ENCODE measurements at regions of chr10 and their contacts with region 1.

Region 1: DNA sequence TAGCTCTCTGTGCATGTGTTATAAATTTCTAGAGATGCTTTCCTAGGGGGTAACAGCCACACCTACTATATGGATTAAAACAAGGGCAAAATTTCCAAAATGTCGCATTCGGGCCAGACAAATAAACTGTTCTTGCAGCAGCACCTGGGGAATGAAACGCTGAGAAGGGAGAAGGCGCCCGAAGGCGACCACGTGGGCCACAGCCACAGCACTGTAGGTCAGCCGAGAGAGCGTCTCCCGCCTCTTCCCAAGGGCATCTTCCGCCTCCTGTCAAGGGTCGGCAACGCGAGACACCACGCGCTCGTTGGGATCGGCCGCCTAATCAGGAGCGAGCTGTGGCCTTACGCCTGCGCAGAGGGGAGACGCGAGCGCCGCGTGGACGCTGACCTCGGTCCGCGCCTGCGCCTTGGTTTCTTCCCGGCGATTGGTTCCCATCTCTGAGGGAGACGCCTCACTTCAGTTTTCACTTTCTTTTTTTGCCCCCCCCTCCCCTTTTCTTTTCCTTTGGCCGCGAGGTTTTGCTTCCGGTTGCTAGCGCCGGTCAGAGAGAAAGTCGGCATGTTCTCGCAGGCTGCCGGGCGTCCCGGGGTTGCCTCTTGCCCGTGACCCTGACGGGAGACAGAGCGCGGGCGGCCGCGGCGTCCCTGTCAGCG is at the start of gene TASOR2:
- DNase-seq: peak; percentile 99
- H3K4me3 Mint-ChIP-seq: peak within 1 kb of the TSS; percentile 95
- H3K27ac Mint-ChIP-seq: peak within 1 kb of the TSS; percentile 90
- H3K4me1 Mint-ChIP-seq: peaks cover 4% of the 10 kb centered on the region
- H3K27me3 Mint-ChIP-seq: no peaks in the 10 kb centered on the region
- CTCF ChIP-seq: no peak
- total RNA-seq, gene TASOR2: 93.4 and 123 TPM in 2 replicates

Region 2: GRCh38 chr10:5609952-5610616 is 74.4 kb before region 1 on chr10:
- CTCF ChIA-PET with region 1: no interaction called
- POLR2A ChIA-PET with region 1: no interaction called
- intact Hi-C with region 1: no loop called
- DNase-seq: peak; percentile 91
- H3K4me3 Mint-ChIP-seq: peak overlapping the region; percentile 67
- H3K27ac Mint-ChIP-seq: peak overlapping the region; percentile 91
- H3K4me1 Mint-ChIP-seq: peaks cover 50% of the 10 kb centered on the region
- H3K27me3 Mint-ChIP-seq: no peaks in the 10 kb centered on the region
- CTCF ChIP-seq: no peak

Region 3: GRCh38 chr10:5666008-5666829 is 18.2 kb before region 1 on chr10 and contains the start of gene ASB13:
- CTCF ChIA-PET with region 1: interaction called, 3 read pairs
- POLR2A ChIA-PET with region 1: interaction called, 15 read pairs
- intact Hi-C with region 1: no loop called
- DNase-seq: peak; percentile 63
- H3K4me3 Mint-ChIP-seq: peak within 1 kb of the TSS; percentile 78
- H3K27ac Mint-ChIP-seq: peak within 1 kb of the TSS; percentile 69
- H3K4me1 Mint-ChIP-seq: peaks cover 16% of the 10 kb centered on the region
- H3K27me3 Mint-ChIP-seq: no peaks in the 10 kb centered on the region
- CTCF ChIP-seq: no peak
- total RNA-seq, gene ASB13: 16.3 and 20.7 TPM in 2 replicates

Region 4: DNA sequence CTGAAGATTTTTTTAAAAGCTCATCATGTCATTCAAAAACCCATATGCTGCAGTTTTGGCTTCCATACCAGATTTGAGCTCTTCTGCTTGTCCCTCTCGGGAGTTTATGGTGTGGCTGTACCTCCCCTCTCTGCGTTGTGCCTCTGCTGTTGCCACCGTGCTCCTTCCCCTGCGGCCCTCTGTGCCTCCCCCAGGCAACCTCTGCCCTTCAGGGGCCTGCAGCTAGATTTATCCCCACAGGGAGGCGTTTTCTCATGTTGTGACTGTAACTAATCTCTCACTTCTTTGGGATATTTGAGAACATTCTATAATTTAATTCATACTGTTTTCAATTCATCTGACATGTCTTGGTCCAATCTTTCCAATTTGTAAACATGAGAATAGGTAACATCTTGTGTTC is 52.9 kb after region 1 on chr10:
- CTCF ChIA-PET with region 1: no interaction called
- POLR2A ChIA-PET with region 1: interaction called, 5 read pairs
- intact Hi-C with region 1: loop called (anchors 10 kb)
- DNase-seq: no peak
- H3K4me3 Mint-ChIP-seq: no peak overlapping the region
- H3K27ac Mint-ChIP-seq: no peak overlapping the region
- H3K4me1 Mint-ChIP-seq: no peaks in the 10 kb centered on the region
- H3K27me3 Mint-ChIP-seq: no peaks in the 10 kb centered on the region
- CTCF ChIP-seq: no peak

Region 5: GRCh38 chr10:5873515-5873995 is 189.1 kb after region 1 on chr10:
- CTCF ChIA-PET with region 1: interaction called, 3 read pairs
- POLR2A ChIA-PET with region 1: no interaction called
- intact Hi-C with region 1: loop called (anchors 2 kb)
- DNase-seq: peak; percentile 77
- H3K4me3 Mint-ChIP-seq: no peak overlapping the region
- H3K27ac Mint-ChIP-seq: no peak overlapping the region
- H3K4me1 Mint-ChIP-seq: no peaks in the 10 kb centered on the region
- H3K27me3 Mint-ChIP-seq: no peaks in the 10 kb centered on the region
- CTCF ChIP-seq: peak; percentile 46

Measured in MCF 10A (cell line).